Activated CD4-positive, alpha-beta memory T cell treated with anti-CD3 and anti-CD28 coated beads for 36 hours (primary cell): ENCODE measurements at regions of chr7 and their contacts with region 1.

Region 1: DNA sequence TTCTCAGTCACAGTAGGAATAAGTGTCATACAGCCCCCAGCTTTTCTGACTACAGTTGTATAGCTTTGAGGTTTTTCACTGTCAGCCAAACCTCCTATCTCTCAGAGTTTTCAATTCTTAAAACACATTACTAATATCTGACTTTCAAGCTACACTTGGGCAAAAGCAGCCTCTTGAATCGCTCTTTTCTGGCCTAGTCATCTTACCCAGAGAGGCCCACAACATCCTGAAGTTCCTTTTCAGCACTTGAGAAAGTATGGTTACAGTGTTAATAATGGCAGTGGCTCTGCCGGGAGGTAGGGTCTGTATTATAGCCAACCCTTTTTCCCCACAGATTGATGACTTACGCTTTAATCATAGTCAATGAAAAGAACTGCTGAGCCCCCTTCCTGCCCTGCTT is 181.0 kb downstream of the LRRC4 start:
- DNase-seq: peak; percentile 61
- H3K4me3 Mint-ChIP-seq: no peak overlapping the region
- H3K27ac Mint-ChIP-seq: peak overlapping the region; percentile 79
- H3K4me1 Mint-ChIP-seq: peaks cover 45% of the 10 kb centered on the region
- H3K27me3 Mint-ChIP-seq: no peaks in the 10 kb centered on the region

Region 2: DNA sequence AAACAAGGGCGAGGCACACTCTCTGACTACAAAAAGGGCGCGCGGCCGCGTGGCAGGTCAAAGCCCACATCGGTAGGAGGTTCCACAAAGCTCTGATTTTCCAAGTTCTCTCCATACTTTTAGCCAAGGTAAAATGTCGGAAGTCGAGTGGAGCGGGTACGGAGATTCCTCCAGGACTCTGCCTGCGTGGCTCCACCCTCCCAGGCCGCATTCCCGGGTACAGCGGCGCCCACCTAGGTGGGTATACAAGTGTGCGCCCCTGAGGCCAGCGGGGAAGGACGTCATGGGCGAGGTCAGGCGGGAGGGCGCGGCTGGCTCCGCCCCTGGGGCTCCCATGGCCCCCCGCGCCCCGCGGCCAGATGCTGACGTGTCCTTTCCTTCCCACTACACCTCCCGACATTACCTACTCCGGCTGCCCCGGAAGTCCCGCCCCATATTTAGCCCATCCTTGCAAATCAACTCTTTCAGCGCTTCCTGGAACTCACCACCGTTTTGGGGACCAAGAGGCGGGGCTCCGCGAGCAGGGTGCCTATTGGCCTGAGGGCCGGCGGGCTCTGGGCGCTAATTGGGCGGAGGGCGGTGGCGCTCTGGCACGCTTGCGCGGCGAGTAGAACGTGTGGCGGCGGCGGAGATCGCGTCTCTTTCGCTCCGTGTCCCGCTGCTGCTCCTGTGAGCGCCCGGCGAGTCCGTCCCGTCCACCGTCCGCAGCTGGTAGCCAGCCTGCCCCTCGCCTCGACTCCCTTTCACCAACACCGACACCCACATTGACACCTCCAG is 198.5 kb before region 1 on chr7 and contains the start of gene SND1:
- CTCF ChIA-PET with region 1: no interaction called
- POLR2A ChIA-PET with region 1: no interaction called
- intact Hi-C with region 1: loop called (anchors 5 kb)
- DNase-seq: peak; percentile 100
- H3K4me3 Mint-ChIP-seq: peak within 1 kb of the TSS; percentile 98
- H3K27ac Mint-ChIP-seq: peak within 1 kb of the TSS; percentile 94
- H3K4me1 Mint-ChIP-seq: peaks cover 31% of the 10 kb centered on the region
- H3K27me3 Mint-ChIP-seq: no peaks in the 10 kb centered on the region
- total RNA-seq, gene SND1: 208 to 235 TPM

Region 3: DNA sequence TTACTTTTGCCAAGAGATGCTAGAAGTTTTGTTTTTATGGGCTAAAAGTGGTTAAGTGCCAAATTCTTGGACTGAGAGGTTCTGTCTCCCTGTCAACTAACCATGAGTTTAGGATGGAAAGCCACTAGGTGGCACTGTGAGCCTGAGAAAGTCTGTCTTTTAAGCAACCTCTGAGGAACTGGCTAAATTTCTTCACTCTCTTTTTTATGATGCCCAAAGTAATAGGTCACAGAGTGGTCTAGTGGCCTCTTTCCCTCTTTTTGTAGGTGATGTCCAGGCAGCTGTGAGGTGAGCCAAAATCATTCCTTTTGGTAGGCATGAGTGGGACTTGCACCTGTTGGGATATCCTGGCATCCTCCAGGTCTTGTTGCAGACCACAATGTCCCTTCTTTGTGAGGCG is 141.4 kb before region 1 on chr7:
- CTCF ChIA-PET with region 1: interaction called, 3 read pairs
- POLR2A ChIA-PET with region 1: no interaction called
- intact Hi-C with region 1: loop called (anchors 5 kb)
- DNase-seq: peak; percentile 74
- H3K4me3 Mint-ChIP-seq: no peak overlapping the region
- H3K27ac Mint-ChIP-seq: no peak overlapping the region
- H3K4me1 Mint-ChIP-seq: peaks cover 5% of the 10 kb centered on the region
- H3K27me3 Mint-ChIP-seq: no peaks in the 10 kb centered on the region

Region 4: DNA sequence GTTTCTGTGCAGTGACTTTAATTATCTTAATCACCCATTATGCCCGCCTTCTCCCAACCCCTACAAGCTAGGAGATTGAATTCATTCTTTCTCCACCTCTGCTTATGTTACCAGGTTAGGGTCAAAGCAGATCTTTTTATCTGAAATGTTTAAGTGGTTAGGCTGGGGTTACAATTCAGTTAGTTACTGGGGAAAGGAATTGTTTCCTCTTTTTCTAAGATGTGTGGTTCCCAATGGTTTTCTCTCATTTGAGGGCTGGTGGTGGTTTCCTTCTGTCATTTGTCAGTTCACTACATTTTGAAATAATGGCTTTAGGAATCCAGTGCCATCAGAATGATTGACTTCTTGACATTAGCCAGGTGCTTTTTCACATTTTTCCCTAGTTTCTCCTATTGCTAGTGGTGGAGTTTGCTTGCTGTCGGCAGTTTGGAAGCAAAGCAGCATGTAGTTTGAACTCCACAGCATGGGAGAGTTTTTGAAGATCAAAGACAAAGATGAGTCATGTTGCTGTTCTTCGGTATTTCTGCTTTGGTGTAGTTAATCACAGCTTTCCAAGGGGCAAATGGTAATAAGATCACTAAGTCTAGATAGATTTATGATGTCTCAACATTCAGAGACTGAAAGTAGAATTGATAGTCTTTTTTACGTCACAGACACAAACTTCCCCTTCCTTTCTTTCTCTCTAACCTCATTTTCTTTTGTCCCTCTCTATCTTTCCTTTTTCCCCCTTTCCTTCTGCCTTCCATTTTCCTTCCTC is 30.0 kb before region 1 on chr7:
- CTCF ChIA-PET with region 1: no interaction called
- POLR2A ChIA-PET with region 1: no interaction called
- intact Hi-C with region 1: loop called (anchors 1 kb)
- DNase-seq: no peak
- H3K4me3 Mint-ChIP-seq: peak overlapping the region; percentile 9
- H3K27ac Mint-ChIP-seq: peak overlapping the region; percentile 56
- H3K4me1 Mint-ChIP-seq: peaks cover 37% of the 10 kb centered on the region
- H3K27me3 Mint-ChIP-seq: no peaks in the 10 kb centered on the region

Region 5: DNA sequence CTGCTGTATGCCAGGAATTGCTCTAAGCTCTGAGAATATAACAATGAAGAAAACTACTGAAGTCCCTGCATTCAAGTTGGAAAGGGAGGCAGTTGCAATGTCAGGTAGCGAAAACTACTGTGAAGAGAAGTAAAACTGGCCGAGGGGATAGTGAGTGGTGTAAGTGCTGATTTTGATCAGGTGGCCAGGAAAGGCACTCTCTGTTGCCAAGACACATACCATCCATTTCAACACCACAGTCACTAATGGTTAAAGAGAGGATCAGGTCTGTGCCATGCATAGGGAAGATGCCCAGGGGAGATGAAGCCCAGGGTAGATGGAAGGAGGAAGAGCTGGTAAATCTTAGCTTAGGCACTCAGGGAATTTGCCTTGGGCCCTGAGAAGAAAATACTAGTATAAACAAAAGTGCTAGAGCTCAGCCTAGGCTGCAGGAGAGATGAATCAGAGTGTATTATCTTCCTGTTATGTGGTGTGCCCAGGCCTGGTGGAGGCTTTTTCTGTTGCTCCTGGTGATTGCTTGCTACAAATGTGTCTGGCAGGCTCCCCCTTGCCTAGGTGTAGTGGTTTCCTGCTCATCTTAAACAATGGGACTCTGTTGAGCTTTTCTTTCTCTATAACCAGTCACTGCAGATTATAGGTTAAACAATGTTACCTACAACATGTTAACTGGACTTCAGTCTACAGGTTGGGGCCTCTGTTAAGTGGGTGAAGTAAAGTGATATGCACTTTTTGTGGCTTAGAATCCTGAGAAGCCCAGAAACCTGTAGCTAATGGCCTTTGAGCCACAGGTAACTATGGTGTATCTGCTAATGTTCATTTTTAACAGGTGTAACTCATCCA is 55.5 kb after region 1 on chr7:
- CTCF ChIA-PET with region 1: interaction called, 3 read pairs
- POLR2A ChIA-PET with region 1: interaction called, 4 read pairs
- intact Hi-C with region 1: loop called (anchors 2 kb)
- DNase-seq: peak; percentile 49
- H3K4me3 Mint-ChIP-seq: no peak overlapping the region
- H3K27ac Mint-ChIP-seq: peak overlapping the region; percentile 8
- H3K4me1 Mint-ChIP-seq: peaks cover 59% of the 10 kb centered on the region
- H3K27me3 Mint-ChIP-seq: no peaks in the 10 kb centered on the region